A549 (cell line): ENCODE measurements at regions of chr20 and their contacts with region 1.

Region 1: GRCh38 chr20:25247956-25248785 is at the start of gene PYGB:
- DNase-seq: peak; percentile 89 to 94
- ATAC-seq: peak; percentile 68 to 80
- H3K4me3 ChIP-seq: peak within 1 kb of the TSS; percentile 82
- H3K27ac ChIP-seq: peak within 1 kb of the TSS; percentile 92 to 96
- H3K4me1 ChIP-seq: peaks cover 57% of the 10 kb centered on the region
- CTCF ChIP-seq: no peak
- EP300 ChIP-seq: no peak
- POLR2A ChIP-seq: peak; percentile 98
- RAD21 ChIP-seq: peak in 1 of 2 experiments; percentile 20; a peak in 3 of 5 replicates
- polyA plus RNA-seq, gene PYGB: 100 and 113 TPM in 2 replicates

Region 2: DNA sequence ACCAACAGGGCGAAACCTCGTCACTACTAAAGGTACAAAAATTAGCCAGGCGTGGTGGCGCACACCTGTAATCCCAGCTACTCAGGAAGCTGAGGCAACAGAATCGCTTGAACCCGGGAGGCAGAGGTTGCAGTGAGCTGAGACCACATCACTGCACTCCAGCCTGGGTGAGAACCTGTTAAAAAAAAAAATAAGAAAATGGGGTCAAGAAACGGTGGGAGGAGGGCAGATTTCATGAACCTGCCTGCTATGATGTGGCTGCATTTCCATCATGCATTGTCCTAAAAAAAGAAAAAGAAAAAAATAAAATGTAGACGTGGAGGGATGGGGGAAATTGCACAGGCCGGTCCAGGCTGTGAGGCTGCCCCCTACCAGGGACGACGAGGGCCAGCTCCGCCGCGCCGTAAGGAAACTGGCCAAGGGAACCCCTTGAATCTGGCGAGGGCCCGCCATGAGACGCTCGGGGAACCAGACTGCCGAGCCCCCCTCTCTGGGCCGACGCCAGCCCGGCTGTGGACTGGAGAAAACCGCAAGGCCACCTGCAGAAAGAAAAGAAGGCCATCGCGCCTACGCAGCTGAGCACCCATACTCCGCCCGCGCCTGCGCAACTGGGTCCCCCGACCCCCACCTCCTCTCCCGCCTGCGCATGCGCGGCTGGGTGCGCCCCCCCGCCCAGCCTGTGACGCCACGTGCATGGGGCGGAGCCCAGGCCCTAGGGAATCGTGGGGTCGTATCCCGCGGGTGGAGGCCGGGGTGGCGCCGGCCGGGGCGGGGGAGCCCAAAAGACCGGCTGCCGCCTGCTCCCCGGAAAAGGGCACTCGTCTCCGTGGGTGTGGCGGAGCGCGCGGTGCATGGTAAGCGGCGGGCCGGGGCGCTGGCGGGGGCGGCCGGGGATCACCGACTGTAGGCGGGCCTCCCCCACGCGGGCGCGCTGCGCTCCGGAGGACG is 52.9 kb before region 1 on chr20 and contains the start of gene ENTPD6:
- CTCF ChIA-PET with region 1: interaction called, 37 read pairs
- POLR2A ChIA-PET with region 1: interaction called, 49 read pairs
- DNase-seq: peak; percentile 93 to 98
- ATAC-seq: peak; percentile 84 to 89
- H3K4me3 ChIP-seq: peak within 1 kb of the TSS; percentile 95
- H3K27ac ChIP-seq: peak within 1 kb of the TSS; percentile 92 to 94
- H3K4me1 ChIP-seq: peaks cover 28% of the 10 kb centered on the region
- CTCF ChIP-seq: peak; percentile 46
- EP300 ChIP-seq: no peak
- POLR2A ChIP-seq: peak; percentile 94
- RAD21 ChIP-seq: peak; percentile 13 to 35; a peak in 3 of 5 replicates
- polyA plus RNA-seq, gene ENTPD6: 85.7 and 95.4 TPM in 2 replicates

Region 3: DNA sequence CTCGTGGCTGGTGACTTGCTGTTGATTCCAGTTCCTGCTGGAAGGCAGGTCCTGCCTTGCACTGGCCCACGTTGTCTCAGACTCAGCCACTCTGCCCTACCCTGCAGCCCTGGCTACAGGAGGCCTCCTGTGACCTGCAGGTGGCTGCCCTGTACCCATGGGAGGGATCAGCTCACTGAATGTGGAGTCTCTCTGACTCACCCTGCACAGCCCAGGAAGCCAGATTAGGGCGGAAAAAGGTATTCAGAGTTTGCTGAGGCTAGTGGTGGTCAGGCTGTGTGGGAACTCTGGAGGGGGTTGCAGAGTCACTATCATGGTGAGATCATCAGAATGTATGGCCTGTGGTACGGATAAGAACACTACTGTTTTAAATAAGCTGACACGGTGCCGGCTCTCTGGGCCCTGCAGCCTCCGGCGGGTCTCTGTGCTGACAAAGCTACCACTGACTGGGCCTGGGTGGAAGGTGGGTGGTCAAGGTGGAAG is 25.0 kb before region 1 on chr20:
- CTCF ChIA-PET with region 1: interaction called, 300 read pairs
- POLR2A ChIA-PET with region 1: interaction called, 67 read pairs
- DNase-seq: peak; percentile 92 to 97
- ATAC-seq: peak; percentile 88
- H3K4me3 ChIP-seq: no peak overlapping the region
- H3K27ac ChIP-seq: peak overlapping the region; percentile 79 to 88
- H3K4me1 ChIP-seq: peaks cover 67% of the 10 kb centered on the region
- CTCF ChIP-seq: peak; percentile 47
- EP300 ChIP-seq: peak in 1 of 2 experiments; percentile 39; a peak in 1 of 5 replicates
- POLR2A ChIP-seq: no peak
- RAD21 ChIP-seq: peak; percentile 66 to 67

Region 4: DNA sequence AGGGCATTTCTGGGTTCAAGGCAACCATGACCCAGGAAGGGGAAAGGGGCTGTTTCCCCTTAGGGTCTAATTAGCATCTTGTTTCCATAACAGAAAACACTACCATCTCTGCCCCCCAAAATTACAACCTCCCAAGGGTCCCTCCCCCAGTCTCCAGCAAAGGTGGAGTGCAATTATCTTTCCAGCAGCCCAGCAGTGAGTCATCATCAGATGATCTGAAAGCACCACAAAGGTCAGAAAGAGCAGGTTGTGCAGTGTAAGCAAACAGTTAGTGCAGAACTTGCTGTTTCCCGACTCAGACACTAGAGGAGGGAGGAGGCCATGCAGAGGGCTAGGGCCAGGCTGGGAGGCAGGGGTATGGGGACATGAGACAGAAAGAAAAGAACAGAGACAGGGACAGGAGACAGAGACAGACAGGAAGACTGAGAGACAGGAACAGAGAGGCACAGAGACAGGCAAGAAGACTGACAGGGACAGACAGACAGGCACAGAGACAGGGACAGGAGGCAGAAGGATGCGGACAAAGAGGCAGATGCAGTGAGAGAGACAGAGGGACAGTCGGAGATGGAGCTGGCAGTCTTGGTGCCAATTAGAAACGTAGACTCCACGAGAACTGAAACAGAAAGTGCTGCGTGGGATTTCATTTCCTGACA is 62.2 kb after region 1 on chr20:
- CTCF ChIA-PET with region 1: interaction called, 7 read pairs
- POLR2A ChIA-PET with region 1: interaction called, 11 read pairs
- DNase-seq: peak; percentile 95 to 97
- ATAC-seq: peak; percentile 75 to 87
- H3K4me3 ChIP-seq: peak overlapping the region; percentile 26
- H3K27ac ChIP-seq: peak overlapping the region; percentile 97 to 98
- H3K4me1 ChIP-seq: peaks cover 71% of the 10 kb centered on the region
- CTCF ChIP-seq: peak; percentile 67
- EP300 ChIP-seq: peak; percentile 70 to 78; a peak in 2 of 5 replicates
- POLR2A ChIP-seq: no peak
- RAD21 ChIP-seq: peak; percentile 81 to 83